ENCODE measurements at regions of chr6 and their contacts with region 1.

Region 1: GRCh38 chr6:142845624-142846458 is 99.1 kb downstream of the HIVEP2 start:
- DNase-seq: peak; percentile 43
- ATAC-seq: peak; percentile 66
- H3K4me3 ChIP-seq: peak overlapping the region; percentile 15 to 71 (median 41)
- H3K4me3 Mint-ChIP-seq: peak overlapping the region; percentile 95
- H3K27ac ChIP-seq: peak overlapping the region; percentile 86 to 94
- H3K27ac Mint-ChIP-seq: peak overlapping the region; percentile 97
- H3K4me1 ChIP-seq: peaks cover 74 to 78% of the 10 kb centered on the region in 2 donors
- H3K4me1 Mint-ChIP-seq: peaks cover 90% of the 10 kb centered on the region
- H3K27me3 ChIP-seq: no peaks in the 10 kb centered on the region
- H3K27me3 Mint-ChIP-seq: no peaks in the 10 kb centered on the region
- CTCF ChIP-seq: no peak

Region 2: GRCh38 chr6:142763205-142763604 is 82.6 kb before region 1 on chr6:
- CTCF ChIA-PET with region 1: no interaction called
- POLR2A ChIA-PET with region 1: no interaction called
- intact Hi-C with region 1: no loop called
- DNase-seq: no peak
- ATAC-seq: no peak
- H3K4me3 ChIP-seq: no peak overlapping the region
- H3K4me3 Mint-ChIP-seq: no peak overlapping the region
- H3K27ac ChIP-seq: no peak overlapping the region
- H3K27ac Mint-ChIP-seq: peak overlapping the region; percentile 37
- H3K4me1 ChIP-seq: peaks cover 7 to 11% of the 10 kb centered on the region in 2 donors
- H3K4me1 Mint-ChIP-seq: peaks cover 19% of the 10 kb centered on the region
- H3K27me3 ChIP-seq: no peaks in the 10 kb centered on the region
- H3K27me3 Mint-ChIP-seq: no peaks in the 10 kb centered on the region
- CTCF ChIP-seq: no peak

Region 3: GRCh38 chr6:142819603-142820337 is 26.1 kb before region 1 on chr6:
- CTCF ChIA-PET with region 1: interaction called, 6 read pairs
- POLR2A ChIA-PET with region 1: interaction called, 3 read pairs
- intact Hi-C with region 1: loop called (anchors 1 kb)
- DNase-seq: peak; percentile 77
- ATAC-seq: peak; percentile 68
- H3K4me3 ChIP-seq: peak overlapping the region; percentile 18 to 89 (median 52)
- H3K4me3 Mint-ChIP-seq: peak overlapping the region; percentile 92
- H3K27ac ChIP-seq: peak overlapping the region; percentile 86 to 87
- H3K27ac Mint-ChIP-seq: peak overlapping the region; percentile 96
- H3K4me1 ChIP-seq: peaks cover 42 to 47% of the 10 kb centered on the region in 2 donors
- H3K4me1 Mint-ChIP-seq: peaks cover 70% of the 10 kb centered on the region
- H3K27me3 ChIP-seq: no peaks in the 10 kb centered on the region
- H3K27me3 Mint-ChIP-seq: no peaks in the 10 kb centered on the region
- CTCF ChIP-seq: no peak

Region 4: DNA sequence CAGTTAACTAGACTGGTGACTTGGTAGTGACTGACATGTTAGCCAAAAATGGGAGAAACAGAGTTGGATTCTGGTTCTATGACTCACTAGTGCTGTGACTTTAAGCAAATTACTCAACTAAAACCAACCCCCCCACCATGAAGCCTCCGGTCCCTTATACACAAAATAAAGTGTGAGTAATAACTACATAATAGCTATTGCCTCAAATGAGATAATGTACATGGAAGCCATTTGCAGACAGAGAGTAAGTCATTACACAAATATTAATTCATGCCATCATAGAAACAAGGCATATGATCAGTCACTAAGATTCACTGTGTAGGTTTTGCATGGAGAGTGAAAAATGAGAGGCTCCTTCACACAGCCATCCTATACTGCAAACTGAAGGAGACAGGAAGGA is 12.8 kb before region 1 on chr6:
- CTCF ChIA-PET with region 1: interaction called, 5 read pairs
- POLR2A ChIA-PET with region 1: interaction called, 3 read pairs
- intact Hi-C with region 1: loop called (anchors 2 kb)
- DNase-seq: no peak
- ATAC-seq: no peak
- H3K4me3 ChIP-seq: no peak overlapping the region
- H3K4me3 Mint-ChIP-seq: no peak overlapping the region
- H3K27ac ChIP-seq: no peak overlapping the region
- H3K27ac Mint-ChIP-seq: peak overlapping the region; percentile 32
- H3K4me1 ChIP-seq: peaks cover 0 to 10% of the 10 kb centered on the region in 2 donors
- H3K4me1 Mint-ChIP-seq: peaks cover 38% of the 10 kb centered on the region
- H3K27me3 ChIP-seq: no peaks in the 10 kb centered on the region
- H3K27me3 Mint-ChIP-seq: no peaks in the 10 kb centered on the region
- CTCF ChIP-seq: no peak

Region 5: DNA sequence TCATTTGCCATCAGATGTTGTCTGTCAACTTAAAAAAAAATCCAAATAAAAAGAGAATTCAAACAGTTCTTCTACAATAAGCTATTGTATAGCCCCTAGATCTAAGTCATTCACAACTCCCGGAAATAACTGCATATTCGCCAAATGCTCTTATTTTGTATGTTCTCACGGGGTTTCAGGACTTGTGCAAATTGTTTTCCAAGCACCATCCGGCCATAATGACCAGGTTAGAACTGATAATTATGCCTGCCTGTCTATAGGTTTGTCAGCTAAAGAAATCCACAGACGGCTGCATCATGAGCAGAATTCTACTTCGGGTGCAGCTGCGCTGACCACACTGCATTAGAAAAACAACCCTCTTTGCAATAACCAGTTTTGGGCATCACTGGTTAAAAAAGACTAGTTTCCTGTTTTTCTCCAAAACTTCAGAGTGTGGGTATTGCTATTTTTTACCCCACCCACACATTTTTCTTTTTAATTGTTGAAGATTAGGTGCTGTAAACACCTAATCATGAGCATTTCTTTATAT is 11.5 kb after region 1 on chr6:
- CTCF ChIA-PET with region 1: interaction called, 8 read pairs
- POLR2A ChIA-PET with region 1: interaction called, 22 read pairs
- intact Hi-C with region 1: loop called (anchors 1 kb)
- DNase-seq: peak; percentile 61
- ATAC-seq: peak; percentile 67
- H3K4me3 ChIP-seq: peak overlapping the region; percentile 24 to 73 (median 52)
- H3K4me3 Mint-ChIP-seq: peak overlapping the region; percentile 83
- H3K27ac ChIP-seq: peak overlapping the region; percentile 83 to 84
- H3K27ac Mint-ChIP-seq: peak overlapping the region; percentile 94
- H3K4me1 ChIP-seq: peaks cover 69 to 77% of the 10 kb centered on the region in 2 donors
- H3K4me1 Mint-ChIP-seq: peaks cover 81% of the 10 kb centered on the region
- H3K27me3 ChIP-seq: no peaks in the 10 kb centered on the region
- H3K27me3 Mint-ChIP-seq: no peaks in the 10 kb centered on the region
- CTCF ChIP-seq: no peak

Region 6: DNA sequence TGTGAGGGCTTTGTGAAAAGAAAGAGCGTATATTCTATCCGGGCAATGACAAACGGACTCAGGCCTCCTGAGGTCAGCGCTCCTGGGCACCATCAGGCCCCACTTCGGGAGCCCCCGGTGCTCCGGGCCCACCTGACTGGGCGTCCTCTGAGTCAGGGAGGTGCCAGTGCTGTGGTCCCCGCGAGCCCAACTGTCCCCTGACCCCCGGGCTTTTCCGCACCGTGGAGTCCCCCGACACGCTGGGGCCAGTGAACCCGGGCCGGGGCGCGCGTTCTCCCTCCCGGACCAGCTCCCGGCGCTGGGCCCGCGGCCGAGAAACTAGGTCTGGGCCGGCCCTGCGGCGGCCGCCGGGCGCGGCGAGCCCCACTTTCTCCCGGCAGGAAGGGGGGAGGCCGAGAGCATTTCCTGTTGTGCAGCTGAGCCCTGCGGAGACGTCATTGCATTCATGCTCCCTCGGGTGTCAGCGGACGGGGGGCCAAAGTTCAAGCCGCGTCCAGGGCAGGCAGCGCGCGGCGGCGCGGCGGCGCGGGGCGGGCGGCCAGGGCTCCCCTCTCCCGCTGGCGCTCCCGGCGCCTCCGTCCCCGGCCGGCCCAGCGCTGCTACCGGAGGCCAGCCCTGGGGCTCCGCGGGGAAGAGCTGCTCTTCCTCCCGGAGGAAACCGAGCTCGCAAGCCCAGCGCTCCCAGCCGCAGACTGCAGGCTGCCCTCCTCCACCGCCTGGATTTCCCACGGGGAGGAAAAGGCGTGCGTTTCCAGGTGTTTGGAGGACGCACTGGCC is 80.8 kb after region 1 on chr6:
- CTCF ChIA-PET with region 1: interaction called, 5 read pairs
- POLR2A ChIA-PET with region 1: no interaction called
- intact Hi-C with region 1: loop called (anchors 5 kb)
- DNase-seq: peak; percentile 88
- ATAC-seq: peak; percentile 92
- H3K4me3 ChIP-seq: peak overlapping the region; percentile 46 to 94 (median 75)
- H3K4me3 Mint-ChIP-seq: peak overlapping the region; percentile 98
- H3K27ac ChIP-seq: peak overlapping the region; percentile 98
- H3K27ac Mint-ChIP-seq: peak overlapping the region; percentile 96
- H3K4me1 ChIP-seq: peaks cover 16 to 37% of the 10 kb centered on the region in 2 donors
- H3K4me1 Mint-ChIP-seq: peaks cover 49% of the 10 kb centered on the region
- H3K27me3 ChIP-seq: no peaks in the 10 kb centered on the region
- H3K27me3 Mint-ChIP-seq: no peaks in the 10 kb centered on the region
- CTCF ChIP-seq: no peak